HepG2 (cell line): ENCODE measurements at regions of chr5 and their contacts with region 1.

Region 1: DNA sequence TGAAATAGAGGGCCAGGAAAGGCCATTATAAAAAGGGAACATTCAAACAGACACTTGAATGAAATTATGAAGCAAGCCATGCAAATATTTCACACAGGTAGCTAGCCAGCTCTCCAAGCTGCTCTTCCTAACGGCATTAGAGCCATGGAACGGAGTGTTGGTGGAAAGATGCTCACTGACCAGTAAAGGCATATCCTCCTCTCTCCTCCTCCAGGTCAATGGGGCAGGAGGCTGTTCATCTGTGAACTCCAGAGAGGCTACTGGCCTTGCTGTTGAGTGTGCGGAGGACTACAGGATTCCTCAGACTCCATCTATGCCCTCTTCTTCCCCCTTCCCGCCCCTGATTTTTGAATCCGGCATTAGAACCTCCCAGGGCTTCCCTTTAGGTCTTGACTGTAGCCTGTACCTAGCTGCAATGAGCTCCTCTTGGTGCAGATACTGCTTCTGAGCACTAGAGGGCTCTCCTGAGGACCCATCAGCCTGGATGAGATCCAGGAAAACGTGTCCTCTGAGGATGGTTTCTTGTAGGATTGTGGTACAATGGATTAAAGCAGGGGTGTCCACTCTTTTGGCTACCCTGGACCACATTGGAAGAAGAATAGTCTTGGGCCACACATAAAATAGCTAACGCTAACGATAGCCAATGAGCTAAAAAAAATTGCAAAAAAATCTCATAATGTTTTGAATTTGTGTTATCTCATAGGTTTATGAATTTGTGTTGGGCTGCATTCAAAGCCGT is 162.2 kb downstream of the SREK1 start:
- DNase-seq: peak; percentile 55
- ATAC-seq: peak; percentile 93
- H3K4me3 ChIP-seq: no peak overlapping the region
- H3K27ac ChIP-seq: no peak overlapping the region
- H3K4me1 ChIP-seq: no peaks in the 10 kb centered on the region
- H3K27me3 ChIP-seq: peaks cover 0 to 7% of the 10 kb centered on the region in 2 experiments; a peak in 2 of 5 replicates
- CTCF ChIP-seq: peak; percentile 78
- EP300 ChIP-seq: no peak
- POLR2A ChIP-seq: no peak
- RAD21 ChIP-seq: no peak

Region 2: DNA sequence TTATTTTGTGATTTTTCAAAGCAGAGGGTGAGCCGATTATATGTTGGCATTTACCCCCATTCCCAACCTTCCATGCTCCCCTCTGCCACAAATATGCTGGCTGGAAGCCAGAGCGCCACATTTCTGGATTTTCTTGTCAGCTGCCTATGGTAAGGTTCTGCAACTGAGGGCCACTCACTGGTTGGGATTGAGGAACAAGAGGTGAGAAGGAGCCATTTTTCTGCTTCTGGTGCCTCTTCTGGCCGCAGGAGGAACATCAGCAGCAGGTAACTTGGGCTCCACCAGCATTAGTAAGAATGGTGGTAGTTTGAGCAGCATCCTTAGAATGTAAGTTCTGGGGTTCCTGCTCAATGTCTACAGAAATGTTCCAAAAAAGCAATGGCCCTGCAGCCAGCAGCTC is 130.4 kb after region 1 on chr5:
- CTCF ChIA-PET with region 1: no interaction called
- POLR2A ChIA-PET with region 1: no interaction called
- in situ Hi-C with region 1: no loop called
- intact Hi-C with region 1: loop called (anchors 1 kb)
- DNase-seq: peak; percentile 6
- ATAC-seq: peak; percentile 82
- H3K4me3 ChIP-seq: no peak overlapping the region
- H3K27ac ChIP-seq: no peak overlapping the region
- H3K4me1 ChIP-seq: no peaks in the 10 kb centered on the region
- H3K27me3 ChIP-seq: no peaks in the 10 kb centered on the region
- CTCF ChIP-seq: peak; percentile 30; the same call in 1 of the 2 replicates
- EP300 ChIP-seq: no peak
- POLR2A ChIP-seq: no peak
- RAD21 ChIP-seq: no peak

Region 3: GRCh38 chr5:66454186-66455078 is 148.2 kb after region 1 on chr5:
- CTCF ChIA-PET with region 1: no interaction called
- POLR2A ChIA-PET with region 1: no interaction called
- in situ Hi-C with region 1: no loop called
- intact Hi-C with region 1: no loop called
- DNase-seq: no peak
- ATAC-seq: no peak
- H3K4me3 ChIP-seq: no peak overlapping the region
- H3K27ac ChIP-seq: no peak overlapping the region
- H3K4me1 ChIP-seq: no peaks in the 10 kb centered on the region
- H3K27me3 ChIP-seq: peaks cover 1 to 3% of the 10 kb centered on the region in 2 experiments; a peak in 3 of 5 replicates
- CTCF ChIP-seq: no peak
- EP300 ChIP-seq: no peak
- POLR2A ChIP-seq: no peak
- RAD21 ChIP-seq: no peak

Region 4: DNA sequence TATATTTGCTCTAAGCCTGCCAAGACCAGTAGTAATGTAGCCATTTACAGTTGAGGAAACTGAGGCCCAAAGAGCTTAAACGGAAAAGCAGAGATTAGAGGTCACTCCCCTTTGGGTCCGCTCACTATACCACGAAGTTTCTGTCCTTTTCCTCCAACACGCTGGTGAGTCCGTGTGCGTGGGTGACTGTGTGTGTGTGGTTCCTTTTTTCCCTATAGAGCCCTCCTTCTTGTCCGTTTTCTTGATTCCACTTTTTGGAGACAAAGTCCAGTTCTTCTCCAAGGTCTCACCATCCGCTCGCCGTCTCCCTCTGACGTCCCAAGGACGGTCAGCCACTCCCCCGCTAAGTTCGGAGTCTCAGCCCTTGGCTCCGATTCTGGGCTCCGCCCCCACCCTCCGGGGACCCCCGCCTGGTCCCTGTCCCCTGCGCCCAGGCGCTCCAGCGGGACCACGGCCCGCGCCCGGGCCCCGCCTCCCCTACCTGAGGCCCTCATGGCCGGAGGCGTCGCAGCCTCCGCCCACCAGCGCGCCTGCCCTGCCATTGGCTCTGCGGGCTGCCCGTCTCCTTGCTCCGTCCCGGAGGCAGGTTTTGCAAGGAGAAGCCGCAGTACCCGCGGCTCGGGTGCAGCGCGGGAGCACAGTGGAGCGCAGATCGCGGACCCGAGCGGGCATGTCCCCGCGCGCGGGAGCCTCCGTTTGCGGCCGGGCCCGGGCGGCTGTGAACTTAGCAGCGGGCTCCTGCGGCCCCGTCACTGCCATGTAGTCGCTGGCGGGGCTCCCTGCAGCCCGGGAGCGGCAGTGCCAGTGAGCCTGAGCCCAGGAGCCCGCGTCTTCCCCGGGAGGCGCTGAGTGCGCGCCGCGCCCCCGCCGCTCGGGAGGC is 289.7 kb after region 1 on chr5 and contains the start of gene MAST4:
- CTCF ChIA-PET with region 1: no interaction called
- POLR2A ChIA-PET with region 1: no interaction called
- in situ Hi-C with region 1: no loop called
- intact Hi-C with region 1: loop called (anchors 10 kb)
- DNase-seq: peak; percentile 50
- ATAC-seq: peak; percentile 99
- H3K4me3 ChIP-seq: peak within 1 kb of the TSS; percentile 54 to 75 (median 69); a peak in 5 of 6 replicates
- H3K27ac ChIP-seq: no peak within 1 kb of the TSS
- H3K4me1 ChIP-seq: peaks cover 8% of the 10 kb centered on the region; the same call in 1 of the 2 replicates
- H3K27me3 ChIP-seq: peaks cover 2 to 33% of the 10 kb centered on the region in 2 experiments; a peak in 4 of 5 replicates
- CTCF ChIP-seq: no peak
- EP300 ChIP-seq: no peak
- POLR2A ChIP-seq: no peak
- RAD21 ChIP-seq: peak; percentile 14; the same call in 1 of the 2 replicates
- total RNA-seq, gene MAST4: 3.7 and 4.4 TPM in 2 replicates

Region 5: DNA sequence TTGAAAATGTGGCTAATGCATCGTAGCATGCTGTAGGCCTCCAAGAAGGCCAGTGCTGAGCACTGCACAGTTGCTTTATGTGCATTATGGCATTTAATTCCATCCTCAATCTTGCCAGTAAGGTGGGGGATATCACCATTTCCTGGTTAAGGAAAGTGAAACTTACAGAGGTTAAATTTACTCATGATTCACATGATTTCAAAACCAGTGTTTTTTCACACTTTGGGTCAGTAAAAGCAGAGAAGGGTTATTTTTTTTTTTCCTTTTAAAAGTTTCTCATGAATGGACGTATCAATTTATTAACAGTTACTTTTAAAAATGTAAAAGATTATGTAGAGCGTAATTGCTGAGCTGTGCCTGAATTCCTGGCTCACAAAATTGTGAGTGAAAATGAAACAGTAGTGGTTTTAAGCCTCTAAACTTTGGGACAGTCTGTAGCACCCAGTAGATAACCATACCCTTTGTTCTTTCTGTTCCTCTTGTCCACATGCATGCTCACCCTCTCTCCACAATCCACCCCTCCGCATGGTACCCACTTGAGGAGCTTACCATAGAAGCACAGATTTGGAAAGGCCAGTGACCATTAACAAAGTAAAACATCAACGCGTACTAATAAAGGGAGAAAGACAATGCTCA is 311.1 kb after region 1 on chr5:
- CTCF ChIA-PET with region 1: no interaction called
- POLR2A ChIA-PET with region 1: no interaction called
- in situ Hi-C with region 1: no loop called
- intact Hi-C with region 1: no loop called
- DNase-seq: no peak
- ATAC-seq: no peak
- H3K4me3 ChIP-seq: no peak overlapping the region
- H3K27ac ChIP-seq: no peak overlapping the region
- H3K4me1 ChIP-seq: no peaks in the 10 kb centered on the region
- H3K27me3 ChIP-seq: peaks cover 0 to 26% of the 10 kb centered on the region in 2 experiments; a peak in 3 of 5 replicates
- CTCF ChIP-seq: no peak
- EP300 ChIP-seq: no peak
- POLR2A ChIP-seq: no peak
- RAD21 ChIP-seq: no peak

Region 6: DNA sequence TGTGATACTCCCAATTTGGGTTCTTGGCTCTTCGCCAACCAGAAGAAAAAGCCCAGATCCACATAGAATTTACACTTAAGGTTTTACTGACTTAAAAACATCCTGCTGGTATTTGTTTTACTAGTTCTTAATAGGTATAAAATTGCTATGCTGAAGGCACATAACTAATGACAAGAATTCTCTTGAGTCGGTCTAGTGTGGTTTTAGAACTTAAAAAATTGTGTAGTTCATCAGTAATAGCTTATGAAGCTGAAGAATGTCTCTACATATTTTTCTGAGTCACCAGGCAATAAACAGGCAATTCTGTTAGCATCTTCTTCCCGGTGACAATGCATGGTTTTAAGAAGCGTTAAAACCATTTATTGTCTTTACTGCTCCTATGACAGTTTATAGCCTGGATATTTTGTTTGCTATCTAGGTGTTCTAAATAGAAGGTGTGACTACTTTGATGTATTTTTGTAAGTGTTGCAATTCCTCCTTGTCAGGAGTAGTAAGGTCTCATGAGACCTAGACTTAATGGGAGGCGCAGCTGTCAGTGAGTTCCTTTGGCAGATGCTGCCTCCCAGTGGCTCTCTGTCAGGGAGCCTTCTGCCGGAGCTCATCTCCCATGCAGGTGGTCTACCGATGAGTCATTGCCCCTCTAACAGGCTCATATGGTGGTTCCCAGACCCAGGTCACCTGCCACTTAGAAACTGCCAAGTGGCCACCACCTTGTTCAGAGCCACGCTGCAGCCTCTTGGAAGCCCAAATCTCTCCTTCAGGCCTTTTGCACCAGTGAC is 463.8 kb after region 1 on chr5:
- CTCF ChIA-PET with region 1: interaction called, 3 read pairs
- POLR2A ChIA-PET with region 1: no interaction called
- in situ Hi-C with region 1: no loop called
- intact Hi-C with region 1: loop called (anchors 1 kb)
- DNase-seq: peak; percentile 5
- ATAC-seq: peak; percentile 49; the same call in 2 of the 3 replicates
- H3K4me3 ChIP-seq: no peak overlapping the region
- H3K27ac ChIP-seq: no peak overlapping the region
- H3K4me1 ChIP-seq: no peaks in the 10 kb centered on the region
- H3K27me3 ChIP-seq: no peaks in the 10 kb centered on the region; a peak in 1 of 5 replicates
- CTCF ChIP-seq: peak; percentile 62
- EP300 ChIP-seq: no peak
- POLR2A ChIP-seq: no peak
- RAD21 ChIP-seq: no peak

Region 7: DNA sequence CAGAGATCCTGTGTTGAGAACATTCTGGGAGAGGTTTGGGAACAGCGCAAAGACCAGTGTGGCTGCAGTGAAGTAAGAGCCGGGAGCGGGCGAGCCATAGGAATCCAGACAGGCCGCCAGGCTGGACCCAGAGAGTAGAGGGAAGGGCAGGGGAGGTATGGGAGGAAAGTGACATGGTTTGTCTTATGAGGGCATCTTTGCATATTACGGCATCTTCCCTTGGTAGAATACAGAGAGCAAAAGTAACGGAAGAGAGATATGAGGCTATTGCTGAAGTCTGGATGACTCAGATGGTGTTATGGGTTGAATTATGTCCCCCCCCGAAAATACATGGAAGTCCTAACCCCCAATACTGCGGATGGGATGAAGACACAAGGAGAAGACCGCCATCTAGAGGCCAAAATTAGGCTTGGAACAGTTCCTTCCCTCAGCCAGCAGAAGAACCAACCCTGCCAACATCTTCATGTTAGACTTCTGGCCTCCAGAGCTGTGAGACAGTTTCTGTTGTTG is 558.1 kb after region 1 on chr5:
- CTCF ChIA-PET with region 1: no interaction called
- POLR2A ChIA-PET with region 1: no interaction called
- in situ Hi-C with region 1: no loop called
- intact Hi-C with region 1: loop called (anchors 5 kb)
- DNase-seq: peak; percentile 15
- ATAC-seq: peak; percentile 78
- H3K4me3 ChIP-seq: no peak overlapping the region
- H3K27ac ChIP-seq: no peak overlapping the region
- H3K4me1 ChIP-seq: no peaks in the 10 kb centered on the region
- H3K27me3 ChIP-seq: 0 out of 5 replicates have a peak, but pooled peaks cover 0 to 3% of the 10 kb centered on the region in 2 experiments
- CTCF ChIP-seq: peak; percentile 66
- EP300 ChIP-seq: no peak
- POLR2A ChIP-seq: no peak
- RAD21 ChIP-seq: no peak

Region 8: GRCh38 chr5:67215583-67216471 is 909.6 kb after region 1 on chr5:
- CTCF ChIA-PET with region 1: no interaction called
- POLR2A ChIA-PET with region 1: no interaction called
- in situ Hi-C with region 1: loop called (anchors 10 kb)
- intact Hi-C with region 1: no loop called
- DNase-seq: peak; percentile 71
- ATAC-seq: peak; percentile 95
- H3K4me3 ChIP-seq: peak overlapping the region; percentile 42 to 58 (median 51)
- H3K27ac ChIP-seq: peak overlapping the region; percentile 15
- H3K4me1 ChIP-seq: peaks cover 34% of the 10 kb centered on the region
- H3K27me3 ChIP-seq: no peaks in the 10 kb centered on the region; a peak in 1 of 5 replicates
- CTCF ChIP-seq: no peak
- EP300 ChIP-seq: no peak
- POLR2A ChIP-seq: peak in 1 of 2 experiments; percentile 51; a peak in 1 of 4 replicates
- RAD21 ChIP-seq: no peak